Colonic mucosa (tissue), 4 donors: ENCODE measurements at regions of chr2 and their contacts with region 1.

Region 1: DNA sequence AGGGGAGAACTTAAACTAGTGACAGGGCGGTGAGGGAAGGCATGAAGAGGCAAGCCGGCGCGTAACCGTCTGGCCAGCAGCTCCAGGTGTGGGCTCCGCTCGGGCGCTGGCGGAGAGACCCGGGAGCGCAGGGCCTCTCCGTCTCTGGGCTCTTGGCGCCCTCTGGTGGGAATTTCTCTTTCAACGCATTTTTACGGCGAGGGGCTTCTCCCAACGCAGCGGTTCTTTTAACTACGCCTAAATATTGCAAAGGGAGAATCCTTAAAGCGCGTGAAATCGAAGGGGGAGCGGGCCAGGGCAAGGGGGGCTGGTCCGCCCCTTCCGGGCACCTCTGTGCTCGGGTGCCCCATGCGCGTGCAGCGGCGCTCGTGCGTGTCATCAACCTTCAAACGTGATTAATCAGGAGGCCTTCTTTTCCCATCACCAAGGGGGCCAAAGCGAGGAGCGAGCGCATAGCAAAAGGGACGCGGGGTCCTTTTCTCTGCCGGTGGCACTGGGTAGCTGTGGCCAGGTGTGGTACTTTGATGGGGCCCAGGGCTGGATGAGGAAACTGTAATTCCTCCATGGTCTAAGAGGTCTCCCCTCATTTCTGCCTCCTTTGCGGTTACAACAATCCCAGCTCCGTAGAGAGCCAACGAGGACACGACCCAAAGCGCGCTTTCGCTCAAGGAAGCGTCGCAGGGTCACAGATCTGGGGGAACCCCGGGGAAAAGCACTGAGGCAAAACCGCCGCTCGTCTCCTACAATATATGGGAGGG is 762 bp upstream of the GAD1 start:
- DNase-seq: peak; percentile 69
- H3K4me3 ChIP-seq: peak overlapping the region; percentile 32
- H3K27ac ChIP-seq: no peak overlapping the region
- H3K4me1 ChIP-seq: peaks cover 17% of the 10 kb centered on the region
- H3K27me3 ChIP-seq: peaks cover 76% of the 10 kb centered on the region
- CTCF ChIP-seq: peak; percentile 67

Region 2: GRCh38 chr2:170235860-170236679 is 579.9 kb before region 1 on chr2:
- intact Hi-C with region 1: loop called (anchors 5 kb)
- DNase-seq: no peak
- H3K4me3 ChIP-seq: no peak overlapping the region
- H3K27ac ChIP-seq: no peak overlapping the region
- H3K4me1 ChIP-seq: no peaks in the 10 kb centered on the region
- H3K27me3 ChIP-seq: no peaks in the 10 kb centered on the region
- CTCF ChIP-seq: peak; percentile 38

Region 3: GRCh38 chr2:170361090-170361936 is 454.6 kb before region 1 on chr2:
- intact Hi-C with region 1: loop called (anchors 5 kb)
- DNase-seq: peak; percentile 61
- H3K4me3 ChIP-seq: no peak overlapping the region
- H3K27ac ChIP-seq: no peak overlapping the region
- H3K4me1 ChIP-seq: no peaks in the 10 kb centered on the region
- H3K27me3 ChIP-seq: no peaks in the 10 kb centered on the region
- CTCF ChIP-seq: peak; percentile 62

Region 4: GRCh38 chr2:170409164-170409535 is 406.8 kb before region 1 on chr2:
- intact Hi-C with region 1: loop called (anchors 5 kb)
- DNase-seq: peak; percentile 85
- H3K4me3 ChIP-seq: no peak overlapping the region
- H3K27ac ChIP-seq: no peak overlapping the region
- H3K4me1 ChIP-seq: no peaks in the 10 kb centered on the region
- H3K27me3 ChIP-seq: no peaks in the 10 kb centered on the region
- CTCF ChIP-seq: peak; percentile 84

Region 5: GRCh38 chr2:170486730-170487129 is 329.2 kb before region 1 on chr2:
- intact Hi-C with region 1: loop called (anchors 10 kb)
- DNase-seq: no peak
- H3K4me3 ChIP-seq: no peak overlapping the region
- H3K27ac ChIP-seq: no peak overlapping the region
- H3K4me1 ChIP-seq: no peaks in the 10 kb centered on the region
- H3K27me3 ChIP-seq: no peaks in the 10 kb centered on the region
- CTCF ChIP-seq: no peak

Region 6: DNA sequence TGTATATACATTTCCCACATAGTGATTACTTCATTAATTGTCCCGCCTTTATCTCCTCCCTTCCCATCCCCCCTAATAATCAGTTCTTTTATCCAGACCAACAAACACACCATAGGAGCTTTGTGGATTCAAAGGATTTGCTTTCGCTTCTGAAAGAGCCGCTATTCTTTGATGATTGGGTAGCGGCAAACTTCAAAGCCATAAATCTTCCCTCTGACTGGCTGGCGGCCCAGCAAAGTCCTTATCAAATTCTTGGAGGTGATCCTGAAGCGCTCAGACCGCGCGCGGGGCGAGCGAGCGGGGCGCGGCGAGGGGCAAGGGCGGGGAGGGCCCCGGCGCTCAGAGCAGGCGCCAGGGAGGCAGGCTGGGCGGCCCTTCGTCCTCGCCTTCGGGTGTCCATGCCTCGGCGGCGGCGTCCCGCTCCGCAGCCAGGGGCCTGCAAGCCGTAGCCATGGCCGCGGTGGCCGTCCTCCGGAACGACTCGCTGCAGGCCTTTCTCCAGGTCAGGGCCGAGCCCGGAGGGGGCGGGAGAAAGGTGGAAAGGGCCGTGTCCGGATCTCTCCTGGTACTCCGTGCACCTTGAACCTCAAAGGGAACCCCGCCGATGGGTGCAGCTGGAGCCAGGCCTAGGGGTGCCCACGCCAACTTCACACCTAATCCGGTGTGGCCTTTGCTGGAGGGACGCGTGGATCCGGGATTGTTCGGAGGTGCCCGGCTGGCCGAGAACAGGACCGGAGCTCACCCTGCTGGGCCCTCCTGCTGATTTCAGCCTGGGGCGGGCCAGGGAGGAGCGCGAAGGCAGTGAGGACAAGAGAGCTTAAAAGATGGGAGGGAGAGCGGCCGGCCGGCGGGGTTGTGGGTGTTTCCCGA is 100.6 kb before region 1 on chr2 and contains the start of gene SP5:
- intact Hi-C with region 1: loop called (anchors 5 kb)
- DNase-seq: peak; percentile 65
- H3K4me3 ChIP-seq: peak within 1 kb of the TSS; percentile 50
- H3K27ac ChIP-seq: no peak within 1 kb of the TSS
- H3K4me1 ChIP-seq: peaks cover 12% of the 10 kb centered on the region
- H3K27me3 ChIP-seq: peaks cover 59% of the 10 kb centered on the region
- CTCF ChIP-seq: no peak
- total RNA-seq, gene SP5: 1.2 to 3.5 TPM

Region 7: DNA sequence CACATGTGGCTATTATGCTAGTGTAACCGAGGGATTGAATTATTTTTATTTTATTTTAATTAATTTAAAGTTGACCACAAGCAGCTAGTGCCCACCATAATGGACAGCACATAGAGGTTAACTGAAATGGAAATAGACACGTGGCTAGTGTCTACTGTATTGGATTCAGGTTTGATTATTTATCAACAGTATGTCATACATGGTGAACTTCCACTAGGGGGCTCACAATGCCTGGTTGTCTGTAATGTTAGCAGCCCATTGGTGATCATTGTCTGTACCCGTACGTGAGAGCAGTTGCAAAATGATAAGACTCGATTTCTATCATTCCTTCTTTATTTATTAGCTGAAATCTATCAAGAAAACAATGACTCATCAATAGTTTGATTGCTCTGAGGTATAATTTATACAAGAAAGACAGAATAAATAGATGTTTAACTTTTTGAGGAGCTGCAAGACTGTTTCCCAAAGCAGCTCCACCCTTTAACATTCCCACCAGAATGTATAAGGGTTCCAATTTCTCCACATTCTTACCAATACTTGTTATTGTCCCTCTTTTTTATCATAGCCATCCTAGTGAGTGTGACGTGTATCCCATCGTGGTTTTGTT is 782.9 kb after region 1 on chr2:
- intact Hi-C with region 1: no loop called
- DNase-seq: peak; percentile 46
- H3K4me3 ChIP-seq: no peak overlapping the region
- H3K27ac ChIP-seq: no peak overlapping the region
- H3K4me1 ChIP-seq: no peaks in the 10 kb centered on the region
- H3K27me3 ChIP-seq: no peaks in the 10 kb centered on the region
- CTCF ChIP-seq: peak; percentile 80